BJ (cell line): ENCODE measurements at regions of chr13 and their contacts with region 1.

Region 1: DNA sequence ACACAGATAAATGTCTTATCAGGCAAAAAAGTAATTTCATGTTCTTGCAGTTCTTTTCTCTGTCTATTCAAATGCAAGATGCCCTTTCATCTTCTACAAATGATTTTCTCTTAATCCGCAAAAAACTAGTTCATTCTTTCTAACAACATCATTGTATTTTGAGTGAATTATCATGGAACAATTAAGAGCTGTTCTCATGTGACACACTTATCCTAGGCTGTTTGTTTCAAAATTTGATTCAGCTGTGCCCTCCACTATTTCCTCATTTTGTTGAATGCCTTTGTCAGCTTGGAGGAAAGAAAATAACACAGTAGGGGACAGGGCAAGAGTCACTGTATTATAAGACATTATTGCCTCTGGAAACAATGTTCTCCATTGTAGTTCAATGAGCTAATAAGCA is 396.9 kb downstream of the KCTD12 start:
- DNase-seq: no peak
- H3K4me3 ChIP-seq: no peak overlapping the region
- H3K27me3 ChIP-seq: peaks cover 1% of the 10 kb centered on the region; the same call in 1 of the 2 replicates
- CTCF ChIP-seq: no peak

Region 2: GRCh38 chr13:75876360-75877050 is 612.8 kb before region 1 on chr13:
- CTCF ChIA-PET with region 1: interaction called, 13 read pairs
- POLR2A ChIA-PET with region 1: no interaction called
- DNase-seq: no peak
- H3K4me3 ChIP-seq: no peak overlapping the region
- H3K27me3 ChIP-seq: no peaks in the 10 kb centered on the region
- CTCF ChIP-seq: peak; percentile 90